IMR-90 (cell line): ENCODE measurements at regions of chr12 and their contacts with region 1.

Region 1: GRCh38 chr12:87039536-87039935 is 783.3 kb upstream of the MGAT4C start:
- DNase-seq: no peak
- ATAC-seq: no peak
- H3K4me3 ChIP-seq: no peak overlapping the region
- H3K27ac ChIP-seq: no peak overlapping the region
- H3K4me1 ChIP-seq: no peaks in the 10 kb centered on the region
- H3K27me3 ChIP-seq: no peaks in the 10 kb centered on the region
- CTCF ChIP-seq: no peak
- POLR2A ChIP-seq: no peak
- RAD21 ChIP-seq: no peak

Region 2: DNA sequence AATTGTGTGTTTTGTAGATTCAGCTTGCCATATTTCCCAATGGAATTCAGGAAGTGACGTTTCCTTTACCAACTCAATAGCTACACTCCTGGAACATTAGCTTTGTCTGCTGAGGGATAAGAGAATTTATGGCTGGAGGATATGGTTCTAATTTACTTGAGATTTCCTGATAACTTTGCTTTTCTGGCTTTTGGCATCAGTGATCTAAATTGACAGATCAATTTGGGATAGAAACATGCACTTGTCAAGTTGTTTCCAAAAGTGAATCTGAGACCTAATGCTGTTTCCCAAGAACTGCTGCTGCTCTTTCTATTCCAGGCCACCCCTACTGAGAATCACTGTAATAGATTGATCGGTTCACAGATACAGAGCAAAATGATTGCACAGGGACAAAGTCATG is 826.5 kb before region 1 on chr12:
- CTCF ChIA-PET with region 1: no interaction called
- POLR2A ChIA-PET with region 1: no interaction called
- dilution Hi-C with region 1: no loop called
- in situ Hi-C with region 1: no loop called
- intact Hi-C with region 1: no loop called
- DNase-seq: no peak
- ATAC-seq: no peak
- H3K4me3 ChIP-seq: no peak overlapping the region
- H3K27ac ChIP-seq: no peak overlapping the region
- H3K4me1 ChIP-seq: no peaks in the 10 kb centered on the region
- H3K27me3 ChIP-seq: no peaks in the 10 kb centered on the region
- CTCF ChIP-seq: no peak
- POLR2A ChIP-seq: no peak
- RAD21 ChIP-seq: no peak

Region 3: GRCh38 chr12:87136330-87136976 is 96.9 kb after region 1 on chr12:
- CTCF ChIA-PET with region 1: no interaction called
- POLR2A ChIA-PET with region 1: no interaction called
- dilution Hi-C with region 1: no loop called
- in situ Hi-C with region 1: no loop called
- intact Hi-C with region 1: no loop called
- DNase-seq: peak; percentile 60
- ATAC-seq: peak; percentile 87
- H3K4me3 ChIP-seq: no peak overlapping the region
- H3K27ac ChIP-seq: peak overlapping the region; percentile 97; the same call in 1 of the 2 replicates
- H3K4me1 ChIP-seq: peaks cover 4% of the 10 kb centered on the region; the same call in 1 of the 2 replicates
- H3K27me3 ChIP-seq: no peaks in the 10 kb centered on the region
- CTCF ChIP-seq: no peak
- POLR2A ChIP-seq: no peak
- RAD21 ChIP-seq: no peak

Region 4: GRCh38 chr12:87430444-87430843 is 390.9 kb after region 1 on chr12:
- CTCF ChIA-PET with region 1: interaction called, 14 read pairs
- POLR2A ChIA-PET with region 1: no interaction called
- dilution Hi-C with region 1: no loop called
- in situ Hi-C with region 1: no loop called
- intact Hi-C with region 1: no loop called
- DNase-seq: no peak
- ATAC-seq: no peak
- H3K4me3 ChIP-seq: no peak overlapping the region
- H3K27ac ChIP-seq: no peak overlapping the region
- H3K4me1 ChIP-seq: no peaks in the 10 kb centered on the region
- H3K27me3 ChIP-seq: no peaks in the 10 kb centered on the region
- CTCF ChIP-seq: no peak
- POLR2A ChIP-seq: no peak
- RAD21 ChIP-seq: no peak